Activated naive CD4-positive, alpha-beta T cell treated with anti-CD3 and anti-CD28 coated beads for 36 hours (primary cell): ENCODE measurements at regions of chr19 and their contacts with region 1.

Region 1: DNA sequence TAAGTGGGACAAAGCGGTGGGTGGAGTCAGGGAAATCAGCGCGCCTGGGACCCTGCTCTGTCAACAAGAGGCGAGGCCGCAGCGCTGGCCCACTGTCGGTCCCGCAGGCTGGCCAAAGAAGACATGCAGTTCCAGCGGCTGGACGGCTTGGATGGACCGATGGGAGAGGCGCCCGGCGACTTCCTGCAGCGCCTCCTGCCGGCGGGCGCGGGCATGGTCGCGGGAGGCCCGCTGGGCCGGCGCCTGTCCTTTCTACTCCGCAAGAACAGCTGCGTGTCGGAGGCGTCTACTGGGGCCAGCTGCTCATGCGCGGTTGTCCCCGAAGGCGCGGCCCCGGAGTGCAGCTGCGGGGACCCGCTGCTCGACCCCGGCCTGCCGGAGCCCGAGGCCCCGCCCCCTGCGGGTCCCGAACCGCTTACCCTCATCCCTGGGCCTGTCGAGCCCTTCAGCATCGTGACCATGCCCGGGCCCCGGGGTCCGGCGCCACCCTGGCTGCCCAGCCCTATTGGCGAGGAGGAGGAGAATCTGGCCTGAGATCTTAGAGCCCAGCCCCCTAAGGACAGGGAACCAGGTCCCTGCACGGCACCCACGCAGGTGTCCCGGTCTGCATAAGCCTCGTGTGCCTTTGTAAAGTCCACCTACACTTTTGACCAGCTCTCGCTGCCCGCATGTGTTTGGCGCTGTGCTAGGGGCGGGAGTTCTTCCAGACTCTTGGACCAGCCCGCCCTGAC is 6.1 kb downstream of the BEST2 start:
- DNase-seq: peak; percentile 63
- H3K4me3 Mint-ChIP-seq: peak overlapping the region; percentile 32
- H3K27ac Mint-ChIP-seq: no peak overlapping the region
- H3K4me1 Mint-ChIP-seq: peaks cover 2% of the 10 kb centered on the region
- H3K27me3 Mint-ChIP-seq: peaks cover 17% of the 10 kb centered on the region

Region 2: GRCh38 chr19:12596927-12597548 is 160.7 kb before region 1 on chr19:
- CTCF ChIA-PET with region 1: no interaction called
- intact Hi-C with region 1: no loop called
- DNase-seq: no peak
- H3K4me3 Mint-ChIP-seq: no peak overlapping the region
- H3K27ac Mint-ChIP-seq: no peak overlapping the region
- H3K4me1 Mint-ChIP-seq: no peaks in the 10 kb centered on the region
- H3K27me3 Mint-ChIP-seq: no peaks in the 10 kb centered on the region

Region 3: GRCh38 chr19:12610540-12611360 is 147.0 kb before region 1 on chr19 and contains the starts of genes ZNF490 and ZNF791:
- CTCF ChIA-PET with region 1: no interaction called
- intact Hi-C with region 1: no loop called
- DNase-seq: peak; percentile 99
- H3K4me3 Mint-ChIP-seq: peak within 1 kb of the TSS; percentile 100
- H3K27ac Mint-ChIP-seq: peak within 1 kb of the TSS; percentile 95
- H3K4me1 Mint-ChIP-seq: peaks cover 43% of the 10 kb centered on the region
- H3K27me3 Mint-ChIP-seq: no peaks in the 10 kb centered on the region
- total RNA-seq, gene ZNF490: 3.9 to 5.0 TPM
- total RNA-seq, gene ZNF791: 11.2 to 11.9 TPM

Region 4: DNA sequence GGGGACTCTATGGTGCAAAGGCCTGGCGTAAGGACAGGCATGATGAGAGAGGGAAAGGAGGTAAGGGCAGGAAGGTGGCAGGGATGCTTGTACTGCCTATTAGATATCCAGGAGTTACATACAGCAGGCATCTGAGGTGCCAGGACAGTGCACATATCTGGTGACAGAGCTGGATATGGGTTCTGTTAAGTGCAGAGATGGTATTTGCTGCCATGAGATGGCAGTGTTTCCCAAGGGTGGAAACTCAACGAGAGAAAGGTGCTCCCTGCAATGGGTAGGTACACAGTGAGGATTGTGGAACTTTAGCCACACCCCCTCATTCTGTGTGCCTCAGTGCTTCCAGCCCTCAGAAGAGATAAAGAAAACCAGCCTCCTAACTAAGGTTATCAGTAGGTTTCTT is 40.8 kb before region 1 on chr19:
- CTCF ChIA-PET with region 1: interaction called, 6 read pairs
- intact Hi-C with region 1: loop called (anchors 1 kb)
- DNase-seq: peak; percentile 55
- H3K4me3 Mint-ChIP-seq: no peak overlapping the region
- H3K27ac Mint-ChIP-seq: peak overlapping the region; percentile 47
- H3K4me1 Mint-ChIP-seq: peaks cover 26% of the 10 kb centered on the region
- H3K27me3 Mint-ChIP-seq: no peaks in the 10 kb centered on the region

Region 5: GRCh38 chr19:12736995-12737834 is 20.5 kb before region 1 on chr19 and contains the start of gene GET3:
- CTCF ChIA-PET with region 1: interaction called, 15 read pairs
- intact Hi-C with region 1: loop called (anchors 1 kb)
- DNase-seq: peak; percentile 90
- H3K4me3 Mint-ChIP-seq: peak within 1 kb of the TSS; percentile 100
- H3K27ac Mint-ChIP-seq: peak within 1 kb of the TSS; percentile 90
- H3K4me1 Mint-ChIP-seq: peaks cover 31% of the 10 kb centered on the region
- H3K27me3 Mint-ChIP-seq: no peaks in the 10 kb centered on the region
- total RNA-seq, gene GET3: 47.7 TPM

Region 6: DNA sequence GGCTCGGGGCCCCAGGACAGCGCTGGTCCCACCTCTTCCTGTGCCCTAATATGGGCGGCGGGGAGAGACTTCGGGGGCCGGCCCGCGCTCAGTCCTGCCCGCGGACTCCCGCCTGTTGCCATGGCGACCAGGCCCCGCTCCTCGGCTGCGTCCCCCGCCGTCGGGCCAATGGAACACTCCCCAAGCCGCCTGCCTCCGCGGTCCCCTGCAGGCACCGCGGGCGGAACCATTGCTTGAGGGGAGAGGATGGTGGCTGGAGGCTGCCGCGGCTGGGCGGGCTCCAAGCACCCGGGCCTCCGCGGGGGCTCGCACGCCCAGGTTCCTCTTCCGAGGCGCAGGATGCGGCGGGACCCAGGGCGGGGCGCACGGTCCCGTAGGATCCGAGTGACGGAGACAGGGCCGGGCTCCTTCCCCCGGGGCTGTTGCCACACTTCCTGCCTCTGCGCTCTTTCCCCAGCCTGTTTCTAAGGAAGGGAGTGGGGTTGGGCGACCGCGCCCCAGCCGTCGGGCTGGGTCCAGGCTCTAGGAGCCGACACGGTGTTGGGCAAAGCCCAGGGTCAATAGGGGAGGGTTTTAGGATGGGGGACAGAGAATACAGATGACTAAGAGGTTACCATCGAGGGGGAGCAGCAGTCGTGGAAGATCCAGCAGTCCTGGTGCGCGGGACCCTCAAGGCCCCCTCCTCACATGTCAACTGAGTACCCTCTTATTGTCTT is 32.4 kb after region 1 on chr19:
- CTCF ChIA-PET with region 1: interaction called, 341 read pairs
- intact Hi-C with region 1: loop called (anchors 5 kb)
- DNase-seq: peak; percentile 97
- H3K4me3 Mint-ChIP-seq: peak overlapping the region; percentile 97
- H3K27ac Mint-ChIP-seq: peak overlapping the region; percentile 96
- H3K4me1 Mint-ChIP-seq: peaks cover 25% of the 10 kb centered on the region
- H3K27me3 Mint-ChIP-seq: no peaks in the 10 kb centered on the region

Region 7: DNA sequence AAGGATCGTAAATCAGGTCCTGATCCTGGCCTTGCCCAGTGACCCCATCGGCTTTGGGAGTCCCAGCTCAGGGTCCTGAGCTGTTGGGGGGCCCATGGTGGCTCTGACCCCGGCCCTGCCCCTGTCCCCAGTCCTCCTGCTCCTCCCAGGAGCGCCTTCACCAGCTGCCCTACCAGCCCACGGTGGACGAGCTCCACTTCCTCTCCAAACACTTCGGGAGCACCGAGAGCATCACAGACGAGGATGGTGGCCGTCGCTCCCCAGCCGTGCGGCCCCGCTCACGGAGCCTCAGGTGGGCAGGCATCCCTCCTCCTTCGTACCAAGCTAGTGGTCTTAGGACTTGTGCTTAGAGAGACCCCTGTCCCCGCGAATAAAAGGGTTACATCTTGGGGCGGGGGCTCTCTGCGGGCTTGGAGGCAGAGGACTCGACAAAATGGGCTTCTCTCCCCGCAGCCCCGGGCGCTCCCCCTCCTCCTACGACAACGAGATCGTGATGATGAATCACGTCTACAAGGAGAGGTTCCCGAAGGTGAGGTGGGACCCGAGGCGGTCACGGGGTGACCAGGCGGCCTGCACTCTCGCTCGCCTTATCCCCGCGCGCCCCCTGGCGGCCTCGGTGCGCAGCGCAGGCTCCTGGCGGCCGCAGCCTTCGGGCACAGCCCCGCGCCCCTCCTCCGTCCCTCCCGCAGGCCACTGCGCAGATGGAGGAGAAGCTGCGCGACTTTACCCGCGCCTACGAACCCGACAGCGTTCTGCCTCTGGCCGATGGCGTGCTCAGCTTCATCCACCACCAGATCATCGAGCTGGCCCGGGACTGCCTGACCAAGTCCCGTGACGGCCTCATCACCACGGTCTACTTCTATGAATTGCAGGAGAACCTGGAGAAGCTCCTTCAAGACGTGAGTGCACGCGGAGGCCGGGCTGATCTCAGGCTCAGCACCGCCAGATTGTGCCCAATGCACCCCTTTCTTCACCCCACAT is 89.7 kb after region 1 on chr19:
- CTCF ChIA-PET with region 1: interaction called, 56 read pairs
- intact Hi-C with region 1: loop called (anchors 1 kb)
- DNase-seq: peak; percentile 87
- H3K4me3 Mint-ChIP-seq: peak overlapping the region; percentile 36
- H3K27ac Mint-ChIP-seq: no peak overlapping the region
- H3K4me1 Mint-ChIP-seq: peaks cover 3% of the 10 kb centered on the region
- H3K27me3 Mint-ChIP-seq: peaks cover 21% of the 10 kb centered on the region

Region 8: GRCh38 chr19:12974301-12975220 is 216.9 kb after region 1 on chr19:
- CTCF ChIA-PET with region 1: no interaction called
- intact Hi-C with region 1: no loop called
- DNase-seq: no peak
- H3K4me3 Mint-ChIP-seq: no peak overlapping the region
- H3K27ac Mint-ChIP-seq: no peak overlapping the region
- H3K4me1 Mint-ChIP-seq: peaks cover 8% of the 10 kb centered on the region
- H3K27me3 Mint-ChIP-seq: peaks cover 10% of the 10 kb centered on the region

Region 9: DNA sequence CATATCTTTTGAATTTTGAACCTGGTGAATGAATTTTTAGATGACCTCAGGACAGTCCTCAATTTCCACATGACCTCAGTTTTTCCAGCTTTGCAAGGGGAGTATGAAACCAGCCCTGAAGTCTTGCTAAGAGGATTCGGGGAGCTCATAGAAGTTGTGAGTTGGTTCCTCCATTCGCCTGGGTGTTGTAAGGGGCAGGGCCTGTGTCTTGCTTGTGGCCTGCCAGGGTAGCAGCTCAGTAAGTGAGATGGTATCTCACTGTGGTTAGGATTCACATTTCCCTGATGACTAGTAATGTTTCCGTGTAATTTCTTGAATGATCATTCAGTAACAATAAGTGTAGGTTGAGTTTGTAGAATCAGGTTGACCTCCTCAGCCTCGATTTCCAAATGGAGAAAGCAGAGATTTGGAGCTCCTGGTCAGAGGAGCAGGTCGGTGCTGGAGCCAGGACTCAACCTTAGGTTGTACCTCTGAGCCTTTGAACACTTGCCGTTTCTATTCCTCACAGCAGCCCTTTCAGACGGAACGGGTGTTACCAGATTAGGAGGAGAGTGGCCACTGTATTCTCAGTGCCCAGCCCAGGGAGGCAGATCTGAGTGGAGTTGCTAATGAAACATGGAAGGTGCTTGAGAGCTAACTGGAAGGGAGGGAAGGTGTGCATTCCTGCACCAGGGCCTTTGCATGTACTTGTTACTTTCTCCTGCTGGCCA is 374.9 kb after region 1 on chr19:
- CTCF ChIA-PET with region 1: no interaction called
- intact Hi-C with region 1: no loop called
- DNase-seq: peak; percentile 51
- H3K4me3 Mint-ChIP-seq: no peak overlapping the region
- H3K27ac Mint-ChIP-seq: peak overlapping the region; percentile 79
- H3K4me1 Mint-ChIP-seq: peaks cover 38% of the 10 kb centered on the region
- H3K27me3 Mint-ChIP-seq: no peaks in the 10 kb centered on the region